Motor neuron (in vitro differentiated cells): ENCODE measurements at regions of chr15 and their contacts with region 1.

Region 1: DNA sequence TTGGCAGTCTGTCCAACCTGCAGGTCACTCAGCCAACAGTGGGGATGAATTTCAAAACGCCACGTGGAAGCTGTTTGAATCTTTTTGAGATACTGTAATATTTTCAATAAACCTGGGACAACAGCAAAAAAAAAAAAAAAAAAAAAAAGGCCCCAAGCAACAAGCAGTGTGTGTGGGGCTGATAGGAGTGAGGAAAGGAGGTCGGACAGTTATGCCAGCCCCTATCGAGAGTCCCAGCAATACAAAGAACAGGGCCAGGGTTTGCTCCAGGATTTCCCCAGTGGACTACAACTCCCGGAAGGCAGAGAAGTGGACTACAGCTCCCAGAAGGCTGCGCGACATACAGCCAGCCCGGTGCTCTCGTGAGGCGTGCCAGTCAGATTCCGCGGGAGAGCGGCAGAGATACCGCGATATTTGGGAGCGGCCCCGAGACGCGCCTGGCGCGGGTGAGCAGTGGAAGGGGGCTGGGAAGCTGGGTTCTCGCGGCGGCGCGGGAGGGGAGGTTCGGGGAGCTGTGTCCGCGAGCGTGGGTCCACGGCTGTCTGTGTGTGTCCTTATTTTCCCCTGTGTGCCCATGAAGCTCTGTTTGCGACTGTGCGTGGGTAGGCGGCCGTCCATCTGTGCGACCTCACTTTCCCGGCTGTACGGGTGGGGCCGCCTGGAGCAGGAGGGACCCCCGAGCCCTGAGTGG is at the start of gene PPCDC:
- ATAC-seq: peak; percentile 98 to 100 (median 99)
- H3K4me3 ChIP-seq: peak within 1 kb of the TSS; percentile 69 to 86 (median 83)
- H3K27ac ChIP-seq: peak within 1 kb of the TSS; percentile 58 to 71
- H3K4me1 ChIP-seq: peaks cover 3% of the 10 kb centered on the region in 2 donors
- total RNA-seq, gene PPCDC: 4.7 to 16.1 (median 9.9) TPM

Region 2: GRCh38 chr15:75201609-75202250 is 178.4 kb after region 1 on chr15 and contains the start of gene C15orf39:
- in situ Hi-C with region 1: loop called in 5 of 9 experiments (anchors 10 kb)
- ATAC-seq: peak; percentile 43 to 76 (median 70)
- H3K4me3 ChIP-seq: peak within 1 kb of the TSS; percentile 45 to 86 (median 72)
- H3K27ac ChIP-seq: no peak within 1 kb of the TSS
- H3K4me1 ChIP-seq: peaks cover 6 to 15% of the 10 kb centered on the region in 2 donors
- total RNA-seq, gene C15orf39: 2.2 to 11.0 (median 5.8) TPM

Region 3: DNA sequence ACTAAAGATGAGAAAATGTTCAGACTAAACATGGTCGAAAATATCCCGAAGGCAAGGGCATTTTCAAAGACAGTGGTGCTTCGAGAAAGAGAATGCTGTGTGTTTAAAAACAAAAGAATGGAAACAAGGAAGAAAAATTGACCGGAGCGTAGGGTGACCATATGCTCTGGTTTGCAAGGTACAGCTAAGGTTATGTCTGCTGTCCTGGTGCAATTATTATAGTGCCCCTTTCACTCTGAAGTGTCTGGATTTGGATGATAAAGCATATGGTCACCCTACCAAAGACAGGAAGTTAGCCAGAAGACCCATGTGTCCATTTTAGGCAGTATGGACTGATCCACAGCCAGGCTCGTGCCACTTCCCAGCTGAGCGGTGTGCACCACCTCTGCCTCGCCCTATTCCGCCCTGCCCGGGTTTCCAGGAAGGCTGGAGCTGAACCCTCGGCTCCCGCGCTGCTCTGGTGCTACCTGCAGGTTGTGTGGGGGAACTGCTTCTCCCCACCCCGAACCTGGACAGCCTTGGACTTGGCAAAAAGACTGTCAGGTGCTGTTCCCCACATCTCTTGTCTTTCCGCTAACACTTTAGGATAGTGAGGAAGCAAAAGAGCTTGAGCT is 284.6 kb after region 1 on chr15:
- in situ Hi-C with region 1: loop called in 1 of 9 experiments (anchors 25 kb)
- ATAC-seq: peak in 7 of 8 experiments; percentile 33 to 94 (median 68)
- H3K4me3 ChIP-seq: no peak overlapping the region
- H3K27ac ChIP-seq: no peak overlapping the region
- H3K4me1 ChIP-seq: no peaks in the 10 kb centered on the region

Region 4: DNA sequence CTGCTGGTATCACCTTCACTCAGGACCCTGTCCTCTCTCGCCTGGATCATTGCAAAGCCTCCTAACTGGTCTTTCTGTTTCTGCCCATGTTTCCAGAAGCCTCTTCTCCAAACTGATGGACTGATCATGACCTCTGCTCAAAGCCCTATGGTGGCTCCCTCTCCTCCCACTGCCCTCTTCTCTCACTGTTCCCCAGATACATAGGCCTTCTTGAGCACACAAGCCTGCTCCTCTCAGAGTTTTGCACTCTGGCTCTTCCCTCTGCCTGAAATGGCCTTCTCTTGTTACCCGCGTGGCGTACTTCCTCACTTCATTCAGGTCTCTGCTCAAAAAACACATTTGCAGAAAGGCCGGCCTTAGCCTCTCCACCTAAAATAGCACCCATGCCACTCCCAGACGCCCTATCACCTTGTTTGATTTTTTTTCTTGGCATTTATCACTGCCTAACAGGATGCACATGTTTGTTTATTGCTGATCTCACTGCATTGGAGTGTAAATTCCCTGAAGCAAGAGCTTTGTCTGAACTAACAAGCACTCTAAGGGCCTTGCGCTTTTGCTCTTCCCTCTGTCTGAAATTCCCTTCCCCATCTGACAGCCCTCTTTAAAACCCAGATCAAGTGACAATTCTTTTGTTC is 1289.3 kb after region 1 on chr15:
- in situ Hi-C with region 1: no loop called
- ATAC-seq: no peak
- H3K4me3 ChIP-seq: no peak overlapping the region
- H3K27ac ChIP-seq: no peak overlapping the region
- H3K4me1 ChIP-seq: peaks cover 0 to 5% of the 10 kb centered on the region in 2 donors